ENCODE measurements at regions of chr20 and their contacts with region 1.

Region 1: GRCh38 chr20:38645980-38646858 is 44.6 kb downstream of the ARHGAP40 start:
- H3K4me3 Mint-ChIP-seq: peak overlapping the region; percentile 61
- H3K27ac Mint-ChIP-seq: no peak overlapping the region
- H3K4me1 Mint-ChIP-seq: no peaks in the 10 kb centered on the region
- H3K27me3 Mint-ChIP-seq: peaks cover 55% of the 10 kb centered on the region

Region 2: GRCh38 chr20:38489181-38489580 is 157.0 kb before region 1 on chr20:
- intact Hi-C with region 1: no loop called
- H3K4me3 Mint-ChIP-seq: no peak overlapping the region
- H3K27ac Mint-ChIP-seq: no peak overlapping the region
- H3K4me1 Mint-ChIP-seq: no peaks in the 10 kb centered on the region
- H3K27me3 Mint-ChIP-seq: no peaks in the 10 kb centered on the region

Region 3: GRCh38 chr20:38751360-38751976 is 105.2 kb after region 1 on chr20:
- intact Hi-C with region 1: loop called (anchors 1 kb)
- H3K4me3 Mint-ChIP-seq: no peak overlapping the region
- H3K27ac Mint-ChIP-seq: no peak overlapping the region
- H3K4me1 Mint-ChIP-seq: peaks cover 30% of the 10 kb centered on the region
- H3K27me3 Mint-ChIP-seq: peaks cover 5% of the 10 kb centered on the region

Region 4: DNA sequence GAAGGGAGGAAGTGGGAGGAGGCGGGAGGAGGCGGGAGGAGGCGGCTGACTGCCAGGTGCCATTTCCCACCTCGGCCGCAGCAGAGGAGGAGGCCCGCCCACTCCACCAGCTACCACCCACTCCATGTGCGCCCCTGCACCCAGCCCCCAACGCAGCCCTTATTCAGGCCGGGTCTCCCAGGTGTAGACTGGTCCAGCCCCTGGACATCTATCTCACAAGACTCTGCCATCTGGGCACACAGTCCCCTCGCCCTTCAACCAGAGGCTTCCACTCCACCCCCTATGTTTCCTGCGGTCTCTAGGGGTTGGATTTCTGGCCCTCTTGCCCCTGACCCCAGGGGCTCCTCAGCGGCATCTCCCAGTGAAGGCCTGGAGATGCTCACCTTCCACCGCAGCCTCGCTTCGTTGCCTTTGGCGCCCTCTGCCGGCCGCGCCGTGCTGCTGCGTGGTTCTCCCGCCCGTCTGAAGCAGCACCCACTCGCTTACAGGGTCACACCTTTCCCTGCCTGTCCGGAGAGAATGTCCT is 247.4 kb after region 1 on chr20:
- intact Hi-C with region 1: loop called (anchors 2 kb)
- H3K4me3 Mint-ChIP-seq: no peak overlapping the region
- H3K27ac Mint-ChIP-seq: no peak overlapping the region
- H3K4me1 Mint-ChIP-seq: peaks cover 19% of the 10 kb centered on the region
- H3K27me3 Mint-ChIP-seq: peaks cover 11% of the 10 kb centered on the region

Region 5: GRCh38 chr20:39049684-39050554 is 403.7 kb after region 1 on chr20:
- intact Hi-C with region 1: loop called (anchors 5 kb)
- H3K4me3 Mint-ChIP-seq: peak overlapping the region; percentile 81
- H3K27ac Mint-ChIP-seq: peak overlapping the region; percentile 86
- H3K4me1 Mint-ChIP-seq: peaks cover 11% of the 10 kb centered on the region
- H3K27me3 Mint-ChIP-seq: peaks cover 20% of the 10 kb centered on the region

Measured in dendritic cell treated with granulocyte-macrophage colony-stimulating factor and Interleukin-4, amounts not matched to agents 40 ng/mL and 50 ng/mL, for 4 days (primary cell).